ENCODE measurements at regions of chr13 and their contacts with region 1.

Region 1: DNA sequence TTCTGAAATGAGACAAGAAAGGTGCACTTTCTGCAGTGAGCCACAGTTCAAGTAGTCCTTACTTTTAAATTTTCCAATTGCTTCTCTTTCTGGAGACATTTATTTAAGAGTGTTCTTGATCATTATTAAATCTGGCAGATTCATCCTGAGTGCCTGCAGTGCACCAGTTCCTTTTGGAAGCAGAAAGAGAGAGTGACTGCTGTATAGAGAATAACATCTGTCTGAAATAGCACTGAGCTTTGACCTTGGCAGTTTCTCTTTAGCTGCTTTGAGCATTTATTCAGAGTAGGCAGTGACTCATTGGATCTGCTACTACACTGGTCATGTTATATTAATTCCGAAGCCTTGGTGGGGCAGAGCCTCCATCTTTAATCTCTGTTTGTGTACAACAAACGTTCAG is 1373.7 kb downstream of the PCDH9 start:
- DNase-seq: no peak
- H3K4me3 ChIP-seq: no peak overlapping the region
- H3K27ac ChIP-seq: no peak overlapping the region
- H3K4me1 ChIP-seq: no peaks in the 10 kb centered on the region
- H3K27me3 ChIP-seq: no peaks in the 10 kb centered on the region
- CTCF ChIP-seq: no peak
- POLR2A ChIP-seq: no peak

Region 2: GRCh38 chr13:65036999-65037398 is 819.4 kb before region 1 on chr13:
- intact Hi-C with region 1: loop called (anchors 5 kb)
- DNase-seq: no peak
- H3K4me3 ChIP-seq: no peak overlapping the region
- H3K27ac ChIP-seq: no peak overlapping the region
- H3K4me1 ChIP-seq: no peaks in the 10 kb centered on the region
- H3K27me3 ChIP-seq: no peaks in the 10 kb centered on the region
- CTCF ChIP-seq: no peak
- POLR2A ChIP-seq: no peak